GM12878 (cell line): ENCODE measurements at regions of chr17 and their contacts with region 1.

Region 1: GRCh38 chr17:59311130-59311920 is 20.1 kb upstream of the YPEL2 start:
- DNase-seq: peak; percentile 28
- ATAC-seq: peak; percentile 99
- H3K4me3 ChIP-seq: no peak overlapping the region
- H3K27ac ChIP-seq: no peak overlapping the region
- H3K4me1 ChIP-seq: no peaks in the 10 kb centered on the region
- H3K27me3 ChIP-seq: no peaks in the 10 kb centered on the region
- CTCF ChIP-seq: peak; percentile 68 to 86 (median 85)
- EP300 ChIP-seq: no peak
- POLR2A ChIP-seq: no peak
- RAD21 ChIP-seq: peak; percentile 88

Region 2: DNA sequence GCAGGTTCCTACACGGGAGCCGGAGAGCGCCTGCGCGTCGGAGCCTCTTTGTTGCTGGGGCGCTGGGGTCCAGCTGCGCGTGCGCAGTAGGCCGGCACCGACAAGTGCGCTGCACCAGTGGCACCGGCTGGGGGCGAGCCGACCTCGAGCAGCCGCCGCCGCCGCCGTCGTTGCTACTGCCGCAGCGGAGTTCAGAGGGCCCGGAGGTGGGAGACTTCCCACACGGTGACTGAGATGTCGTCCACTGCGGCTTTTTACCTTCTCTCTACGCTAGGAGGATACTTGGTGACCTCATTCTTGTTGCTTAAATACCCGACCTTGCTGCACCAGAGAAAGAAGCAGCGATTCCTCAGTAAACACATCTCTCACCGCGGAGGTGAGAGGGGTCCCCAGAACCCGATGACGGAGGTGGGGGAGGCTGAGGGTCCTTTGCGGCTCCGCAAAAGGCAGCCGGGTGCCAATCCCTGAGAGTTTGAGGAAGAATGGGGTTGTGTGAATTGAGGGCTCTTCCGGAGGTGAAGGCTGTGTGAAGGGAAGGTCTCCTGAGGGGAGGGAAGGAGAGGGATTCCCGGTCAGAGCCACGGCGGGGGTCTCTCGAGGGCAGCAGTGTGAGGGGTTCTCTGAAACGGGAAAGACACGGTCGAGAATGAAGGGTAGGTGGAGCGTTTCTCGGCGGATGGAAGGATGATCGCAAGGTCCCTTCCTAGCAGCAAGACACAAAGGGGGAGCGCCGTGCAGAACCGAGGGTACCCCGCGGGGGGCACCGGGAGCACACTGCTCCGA is 90.8 kb before region 1 on chr17 and contains the start of gene GDPD1:
- CTCF ChIA-PET with region 1: interaction called, 28 read pairs
- POLR2A ChIA-PET with region 1: interaction called, 3 read pairs
- RAD21 ChIA-PET with region 1: interaction called, 16 read pairs
- SMC1A ChIA-PET with region 1: interaction called, 10 read pairs
- in situ Hi-C with region 1: no loop called
- intact Hi-C with region 1: loop called (anchors 1 kb)
- DNase-seq: peak; percentile 76
- ATAC-seq: peak; percentile 99
- H3K4me3 ChIP-seq: peak within 1 kb of the TSS; percentile 95
- H3K27ac ChIP-seq: peak within 1 kb of the TSS; percentile 42; the same call in 1 of the 2 replicates
- H3K4me1 ChIP-seq: no peaks in the 10 kb centered on the region
- H3K27me3 ChIP-seq: no peaks in the 10 kb centered on the region
- CTCF ChIP-seq: peak; percentile 62 to 89 (median 68)
- EP300 ChIP-seq: no peak
- POLR2A ChIP-seq: peak; percentile 75
- RAD21 ChIP-seq: peak; percentile 50
- polyA plus RNA-seq, gene GDPD1: 0.18 to 0.40 TPM

Region 3: DNA sequence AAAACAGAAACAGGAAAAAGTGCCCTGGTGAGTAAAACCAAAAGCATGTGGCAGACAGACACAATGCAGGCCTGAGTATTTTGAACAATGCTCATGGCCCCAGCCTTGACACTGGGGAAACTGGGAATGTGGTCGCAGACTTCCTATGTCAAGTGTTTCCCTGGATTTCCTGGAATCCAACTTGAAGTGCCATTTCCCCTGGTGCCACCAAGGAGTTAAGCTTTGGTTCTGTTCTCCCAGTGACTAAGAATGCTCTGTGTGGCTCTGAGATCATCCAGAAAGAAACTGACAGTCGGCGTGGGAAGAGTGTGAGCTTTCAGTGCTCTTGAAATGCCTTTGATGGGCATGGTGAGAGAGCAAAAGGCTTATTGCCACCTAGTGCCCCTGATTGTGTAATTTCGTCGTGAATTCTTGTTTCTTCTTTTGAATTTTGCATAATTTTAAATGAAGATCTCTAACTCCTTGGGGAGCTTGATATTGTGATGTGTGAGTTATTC is 116.1 kb after region 1 on chr17:
- CTCF ChIA-PET with region 1: interaction called, 383 read pairs
- POLR2A ChIA-PET with region 1: no interaction called
- RAD21 ChIA-PET with region 1: interaction called, 13 read pairs
- SMC1A ChIA-PET with region 1: interaction called, 30 read pairs
- in situ Hi-C with region 1: no loop called
- intact Hi-C with region 1: no loop called
- DNase-seq: no peak
- ATAC-seq: peak; percentile 73
- H3K4me3 ChIP-seq: no peak overlapping the region
- H3K27ac ChIP-seq: no peak overlapping the region
- H3K4me1 ChIP-seq: peaks cover 14% of the 10 kb centered on the region
- H3K27me3 ChIP-seq: no peaks in the 10 kb centered on the region
- CTCF ChIP-seq: peak in 1 of 3 experiments; percentile 23; a peak in 2 of 6 replicates
- EP300 ChIP-seq: 0 out of 4 replicates have a peak, but pooled peaks of 1 of the 2 experiments have one; percentile 23
- POLR2A ChIP-seq: no peak
- RAD21 ChIP-seq: peak; percentile 38; the same call in 1 of the 2 replicates

Region 4: GRCh38 chr17:59440784-59441441 is 129.6 kb after region 1 on chr17:
- CTCF ChIA-PET with region 1: interaction called, 383 read pairs
- POLR2A ChIA-PET with region 1: interaction called, 4 read pairs
- RAD21 ChIA-PET with region 1: interaction called, 169 read pairs
- SMC1A ChIA-PET with region 1: interaction called, 217 read pairs
- in situ Hi-C with region 1: loop called (anchors 5 kb)
- intact Hi-C with region 1: loop called (anchors 1 kb)
- DNase-seq: peak; percentile 68
- ATAC-seq: peak; percentile 99
- H3K4me3 ChIP-seq: peak overlapping the region; percentile 34; the same call in 1 of the 2 replicates
- H3K27ac ChIP-seq: no peak overlapping the region
- H3K4me1 ChIP-seq: peaks cover 25% of the 10 kb centered on the region
- H3K27me3 ChIP-seq: no peaks in the 10 kb centered on the region
- CTCF ChIP-seq: peak; percentile 74 to 90 (median 86)
- EP300 ChIP-seq: no peak
- POLR2A ChIP-seq: no peak
- RAD21 ChIP-seq: peak; percentile 97

Region 5: DNA sequence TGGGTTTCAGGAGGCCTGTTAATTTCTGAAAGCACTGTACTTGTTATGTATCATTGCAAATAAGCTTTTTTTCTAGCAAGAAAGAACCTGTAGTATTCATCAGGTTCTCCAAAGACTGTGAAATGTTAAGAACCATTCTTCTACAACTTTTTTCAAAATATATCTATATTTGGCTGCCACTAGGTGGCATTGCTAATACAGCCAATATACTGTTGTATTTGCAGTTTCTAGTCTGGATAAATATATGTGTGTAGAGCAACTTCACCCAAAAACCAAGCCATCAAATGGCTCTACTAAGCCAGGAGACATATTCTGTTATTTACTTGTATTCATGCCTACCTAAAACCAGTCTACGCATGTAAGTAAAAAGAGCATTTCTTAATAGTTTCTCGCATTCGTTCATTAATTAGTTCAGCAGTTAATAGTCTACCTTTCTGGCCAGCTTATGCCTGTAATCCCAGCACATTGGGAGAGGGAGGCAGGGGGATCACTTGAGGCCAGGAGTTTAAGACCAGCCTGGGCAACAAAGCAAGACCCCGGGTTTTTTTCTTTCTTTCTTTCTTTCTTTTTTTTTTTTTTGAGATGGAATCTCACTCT is 435.6 kb after region 1 on chr17:
- CTCF ChIA-PET with region 1: interaction called, 4 read pairs
- POLR2A ChIA-PET with region 1: no interaction called
- RAD21 ChIA-PET with region 1: interaction called, 3 read pairs
- SMC1A ChIA-PET with region 1: interaction called, 4 read pairs
- in situ Hi-C with region 1: no loop called
- intact Hi-C with region 1: loop called (anchors 10 kb)
- DNase-seq: no peak
- ATAC-seq: peak; percentile 83
- H3K4me3 ChIP-seq: no peak overlapping the region
- H3K27ac ChIP-seq: no peak overlapping the region
- H3K4me1 ChIP-seq: peaks cover 4% of the 10 kb centered on the region
- H3K27me3 ChIP-seq: no peaks in the 10 kb centered on the region
- CTCF ChIP-seq: peak; percentile 47 to 65 (median 61)
- EP300 ChIP-seq: no peak
- POLR2A ChIP-seq: no peak
- RAD21 ChIP-seq: peak; percentile 82